Right cardiac atrium (tissue), 5 donors: ENCODE measurements at regions of chr7 and their contacts with region 1.

Region 1: DNA sequence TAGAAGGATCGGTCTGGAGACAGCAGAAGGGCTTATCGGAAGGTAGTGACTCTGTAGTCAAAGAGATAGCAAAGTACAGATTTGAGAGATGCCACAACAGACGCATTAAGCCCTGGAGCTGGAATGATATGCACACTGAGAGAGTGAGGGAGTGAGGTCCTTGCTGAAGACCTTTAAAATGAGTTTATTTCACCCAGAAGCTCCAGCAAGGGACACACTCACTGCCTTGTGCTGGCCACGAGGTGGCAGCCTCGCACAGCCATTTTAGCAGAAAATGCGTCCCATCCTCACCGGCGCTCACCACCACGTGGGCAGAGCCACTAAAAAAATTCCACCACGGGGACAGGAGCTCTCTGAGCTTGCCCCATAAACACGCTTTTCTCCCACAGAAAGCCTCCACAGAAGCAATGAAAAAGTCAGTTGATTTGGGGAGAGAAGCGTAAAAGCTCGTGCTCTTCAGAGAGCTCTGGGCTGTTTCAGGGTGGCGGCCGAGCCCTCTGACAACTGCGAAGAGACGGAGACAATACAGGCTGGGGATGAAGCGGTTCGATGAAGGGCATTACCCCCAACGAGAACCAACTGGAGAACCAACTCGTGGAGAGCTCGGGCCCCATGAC is 163.0 kb upstream of the KLF14 start:
- DNase-seq: peak; percentile 84 to 87 (median 87)
- ATAC-seq: peak; percentile 69 to 74
- H3K4me3 ChIP-seq: no peak overlapping the region
- H3K27ac ChIP-seq: no peak overlapping the region
- H3K4me1 ChIP-seq: peaks cover 8% of the 10 kb centered on the region
- H3K27me3 ChIP-seq: no peaks in the 10 kb centered on the region

Region 2: GRCh38 chr7:130721486-130722280 is 175.3 kb before region 1 on chr7:
- intact Hi-C with region 1: no loop called
- DNase-seq: peak; percentile 82 to 90 (median 85)
- ATAC-seq: peak; percentile 98
- H3K4me3 ChIP-seq: no peak overlapping the region
- H3K27ac ChIP-seq: no peak overlapping the region
- H3K4me1 ChIP-seq: no peaks in the 10 kb centered on the region
- H3K27me3 ChIP-seq: no peaks in the 10 kb centered on the region

Region 3: GRCh38 chr7:130793855-130794618 is 103.0 kb before region 1 on chr7:
- intact Hi-C with region 1: no loop called
- DNase-seq: no peak
- ATAC-seq: no peak
- H3K4me3 ChIP-seq: no peak overlapping the region
- H3K27ac ChIP-seq: no peak overlapping the region
- H3K4me1 ChIP-seq: no peaks in the 10 kb centered on the region
- H3K27me3 ChIP-seq: no peaks in the 10 kb centered on the region

Region 4: GRCh38 chr7:131007394-131008330 is 110.7 kb after region 1 on chr7:
- intact Hi-C with region 1: loop called in 2 of 4 experiments (anchors 10 kb)
- DNase-seq: peak; percentile 65 to 84 (median 66)
- ATAC-seq: peak; percentile 66 to 73
- H3K4me3 ChIP-seq: no peak overlapping the region
- H3K27ac ChIP-seq: peak overlapping the region; percentile 3
- H3K4me1 ChIP-seq: peaks cover 14% of the 10 kb centered on the region
- H3K27me3 ChIP-seq: no peaks in the 10 kb centered on the region

Region 5: DNA sequence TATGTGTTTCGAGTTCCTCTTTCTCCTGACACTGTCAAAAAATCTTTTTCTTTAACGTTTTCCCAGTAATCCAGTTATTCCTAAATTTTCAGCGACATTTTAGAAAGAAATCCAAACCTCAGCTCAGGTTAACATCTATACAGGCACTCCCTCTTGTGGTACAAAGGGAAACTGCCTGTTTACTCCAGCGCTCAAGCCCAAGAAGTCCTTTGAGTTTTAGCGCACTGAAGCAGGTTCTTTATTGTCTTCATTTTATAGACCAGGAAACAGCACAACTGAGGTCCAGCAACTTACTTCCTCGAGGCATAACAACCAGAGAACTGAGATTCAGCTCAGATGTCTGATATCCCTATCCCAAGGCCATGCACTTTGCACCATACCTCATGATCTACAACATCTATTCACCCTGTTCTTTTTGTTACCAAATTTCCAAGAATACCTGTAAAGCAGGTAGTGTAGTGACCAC is 143.5 kb after region 1 on chr7:
- intact Hi-C with region 1: loop called (anchors 5 to 10 kb)
- DNase-seq: peak in 2 of 3 donors; percentile 21 to 42
- ATAC-seq: peak; percentile 62 to 66
- H3K4me3 ChIP-seq: no peak overlapping the region
- H3K27ac ChIP-seq: no peak overlapping the region
- H3K4me1 ChIP-seq: peaks cover 4% of the 10 kb centered on the region
- H3K27me3 ChIP-seq: no peaks in the 10 kb centered on the region

Region 6: GRCh38 chr7:131225619-131226513 is 328.9 kb after region 1 on chr7:
- intact Hi-C with region 1: no loop called
- DNase-seq: peak; percentile 72 to 83 (median 79)
- ATAC-seq: peak; percentile 82 to 98
- H3K4me3 ChIP-seq: no peak overlapping the region
- H3K27ac ChIP-seq: peak overlapping the region; percentile 39
- H3K4me1 ChIP-seq: peaks cover 4% of the 10 kb centered on the region
- H3K27me3 ChIP-seq: no peaks in the 10 kb centered on the region